ENCODE measurements at regions of chr12 and their contacts with region 1.

Region 1: GRCh38 chr12:106955377-106956047 is at the start of gene TMEM263:
- DNase-seq: peak; percentile 91
- ATAC-seq: peak; percentile 84
- H3K4me3 ChIP-seq: peak within 1 kb of the TSS; percentile 89 to 98 (median 96)
- H3K27ac ChIP-seq: peak within 1 kb of the TSS; percentile 97
- H3K4me1 ChIP-seq: peaks cover 51% of the 10 kb centered on the region
- H3K27me3 ChIP-seq: no peaks in the 10 kb centered on the region; a peak in 1 of 5 replicates
- CTCF ChIP-seq: no peak
- EP300 ChIP-seq: no peak
- POLR2A ChIP-seq: peak; percentile 81 to 96
- RAD21 ChIP-seq: peak; percentile 58; the same call in 1 of the 2 replicates
- total RNA-seq, gene TMEM263: 58.6 and 73.7 TPM in 2 replicates

Region 2: DNA sequence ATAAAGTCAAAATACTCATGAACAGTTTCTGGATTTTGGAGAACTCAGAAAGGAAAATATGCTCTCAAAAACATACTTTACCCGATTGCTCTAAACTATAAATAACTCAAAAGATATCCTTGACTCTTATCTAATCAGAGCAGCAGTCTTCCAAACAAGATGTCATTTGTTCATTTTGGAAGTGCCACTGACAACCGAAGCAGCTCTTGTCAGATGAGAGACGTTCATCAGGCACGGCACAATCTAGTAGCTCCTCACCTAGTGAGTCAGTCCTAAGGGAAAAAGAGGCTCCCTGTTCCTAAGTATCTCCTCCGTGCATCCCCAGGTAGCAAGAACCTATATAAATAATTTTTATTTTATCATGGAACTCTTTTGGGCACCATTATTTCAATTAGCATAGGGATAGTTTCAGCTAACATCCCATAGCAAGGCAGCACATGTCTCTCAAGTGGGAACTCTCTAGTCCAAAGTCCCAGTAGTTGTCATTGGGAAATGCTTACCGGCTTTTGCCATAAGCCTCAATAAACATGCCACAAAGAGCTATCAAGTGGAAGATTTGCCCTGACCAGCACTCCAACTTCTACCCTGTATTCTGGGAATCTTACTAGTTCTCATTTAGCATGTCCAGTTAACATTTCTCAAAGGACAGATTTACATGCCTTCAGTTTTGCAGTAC is 13.9 kb before region 1 on chr12:
- CTCF ChIA-PET with region 1: no interaction called
- POLR2A ChIA-PET with region 1: interaction called, 10 read pairs
- in situ Hi-C with region 1: no loop called
- intact Hi-C with region 1: no loop called
- DNase-seq: peak; percentile 26
- ATAC-seq: peak; percentile 63
- H3K4me3 ChIP-seq: no peak overlapping the region
- H3K27ac ChIP-seq: no peak overlapping the region
- H3K4me1 ChIP-seq: peaks cover 12% of the 10 kb centered on the region
- H3K27me3 ChIP-seq: no peaks in the 10 kb centered on the region
- CTCF ChIP-seq: no peak
- EP300 ChIP-seq: no peak
- POLR2A ChIP-seq: no peak
- RAD21 ChIP-seq: no peak

Region 3: DNA sequence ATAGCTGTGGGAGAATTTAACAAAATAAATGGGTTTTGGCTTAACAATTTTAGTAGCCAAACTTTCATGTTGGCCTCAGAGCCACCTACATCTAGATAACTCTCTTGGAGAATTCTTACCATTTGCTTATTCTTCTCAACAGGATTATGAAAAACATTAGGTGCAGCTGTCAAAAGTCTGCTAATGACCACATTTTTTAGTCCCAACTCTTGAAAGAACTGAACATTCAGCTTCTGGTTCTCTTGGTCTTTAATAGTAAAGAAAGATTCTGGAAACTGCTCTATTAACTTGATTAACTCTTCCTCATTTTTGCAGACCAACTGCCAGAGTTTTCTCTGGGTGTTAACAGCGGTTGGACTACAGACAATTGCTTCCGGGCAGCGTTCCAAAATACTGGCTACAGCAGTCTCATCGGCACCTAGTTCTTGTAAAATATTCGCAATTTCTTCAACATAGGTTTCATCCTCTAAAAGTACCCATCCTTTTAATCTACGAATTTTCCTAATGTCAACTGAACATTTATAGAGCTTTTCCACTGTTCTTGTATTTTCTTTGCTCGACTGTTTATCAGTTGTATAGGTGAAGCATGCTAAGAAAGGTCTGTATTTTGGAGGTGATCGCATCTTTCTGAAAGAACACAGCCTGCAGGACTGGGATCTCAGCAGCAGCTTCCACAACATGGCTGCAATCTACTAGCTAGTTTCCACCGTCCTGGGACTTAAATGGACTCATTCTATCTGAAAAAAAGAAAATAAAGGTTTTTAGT is 22.7 kb after region 1 on chr12:
- CTCF ChIA-PET with region 1: no interaction called
- POLR2A ChIA-PET with region 1: interaction called, 33 read pairs
- in situ Hi-C with region 1: no loop called
- intact Hi-C with region 1: loop called (anchors 1 kb)
- DNase-seq: peak; percentile 31
- ATAC-seq: no peak
- H3K4me3 ChIP-seq: no peak overlapping the region
- H3K27ac ChIP-seq: peak overlapping the region; percentile 50
- H3K4me1 ChIP-seq: peaks cover 64% of the 10 kb centered on the region
- H3K27me3 ChIP-seq: no peaks in the 10 kb centered on the region
- CTCF ChIP-seq: no peak
- EP300 ChIP-seq: no peak
- POLR2A ChIP-seq: no peak
- RAD21 ChIP-seq: no peak

Region 4: DNA sequence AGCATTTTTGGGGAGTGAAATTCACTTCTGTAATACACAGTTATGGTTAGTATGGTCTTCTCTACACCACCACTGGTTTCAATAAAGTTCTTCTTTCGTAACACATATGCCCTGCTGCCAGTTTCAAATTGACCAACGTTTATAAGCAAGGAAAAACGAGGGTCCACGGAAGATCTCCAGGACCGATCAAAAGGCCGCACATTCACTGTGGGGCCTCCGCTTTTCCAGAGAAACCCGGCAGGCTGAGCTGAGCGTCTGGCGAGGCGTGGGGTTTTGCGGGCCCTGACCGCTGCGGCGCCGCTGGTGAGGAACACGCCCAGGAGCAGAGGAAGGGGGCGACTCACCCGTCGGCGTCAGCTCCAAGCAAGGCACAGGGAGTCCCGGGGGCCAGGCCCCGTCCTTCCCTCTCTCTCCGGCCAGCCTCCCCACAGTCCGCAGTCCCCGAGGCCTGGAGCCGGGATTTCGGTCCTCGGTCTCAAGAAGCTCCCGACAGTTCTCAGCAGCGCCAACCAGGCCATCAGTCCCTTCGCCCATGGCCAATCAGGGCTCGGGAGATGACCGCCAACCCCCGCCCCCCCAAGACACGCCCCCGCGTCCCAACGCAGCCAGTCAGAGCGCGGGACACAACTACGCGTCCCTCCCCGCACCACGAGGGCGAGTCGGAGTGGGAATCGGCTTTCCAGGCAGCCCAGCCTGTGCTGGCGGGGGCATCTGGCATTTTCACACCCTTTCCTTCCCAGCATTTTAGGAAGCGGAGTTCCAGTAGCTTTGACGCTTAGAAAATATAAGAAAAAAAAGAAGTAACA is 31.3 kb after region 1 on chr12 and contains the start of gene MTERF2:
- CTCF ChIA-PET with region 1: no interaction called
- POLR2A ChIA-PET with region 1: interaction called, 31 read pairs
- in situ Hi-C with region 1: no loop called
- intact Hi-C with region 1: no loop called
- DNase-seq: peak; percentile 90
- ATAC-seq: peak; percentile 94
- H3K4me3 ChIP-seq: peak within 1 kb of the TSS; percentile 70 to 90 (median 76)
- H3K27ac ChIP-seq: peak within 1 kb of the TSS; percentile 71
- H3K4me1 ChIP-seq: peaks cover 22% of the 10 kb centered on the region
- H3K27me3 ChIP-seq: no peaks in the 10 kb centered on the region; a peak in 1 of 5 replicates
- CTCF ChIP-seq: 0 out of 2 replicates have a peak, but pooled peaks have one; percentile 17
- EP300 ChIP-seq: no peak
- POLR2A ChIP-seq: peak in 1 of 2 experiments; percentile 89; a peak in 2 of 4 replicates
- RAD21 ChIP-seq: 0 out of 2 replicates have a peak, but pooled peaks have one; percentile 29
- total RNA-seq, gene MTERF2: 11.6 and 13.6 TPM in 2 replicates

Region 5: GRCh38 chr12:107093417-107094182 is 138.1 kb after region 1 on chr12 and contains the start of gene CRY1:
- CTCF ChIA-PET with region 1: no interaction called
- POLR2A ChIA-PET with region 1: interaction called, 10 read pairs
- in situ Hi-C with region 1: no loop called
- intact Hi-C with region 1: loop called (anchors 2 kb)
- DNase-seq: peak; percentile 89
- ATAC-seq: peak; percentile 91
- H3K4me3 ChIP-seq: peak within 1 kb of the TSS; percentile 70 to 95 (median 78)
- H3K27ac ChIP-seq: peak within 1 kb of the TSS; percentile 99
- H3K4me1 ChIP-seq: peaks cover 24% of the 10 kb centered on the region
- H3K27me3 ChIP-seq: no peaks in the 10 kb centered on the region; a peak in 1 of 5 replicates
- CTCF ChIP-seq: no peak; the same call in 1 of the 2 replicates
- EP300 ChIP-seq: no peak
- POLR2A ChIP-seq: peak; percentile 65 to 85
- RAD21 ChIP-seq: no peak
- total RNA-seq, gene CRY1: 13.9 and 16.2 TPM in 2 replicates